BJ (cell line): ENCODE measurements at regions of chr1 and their contacts with region 1.

Region 1: DNA sequence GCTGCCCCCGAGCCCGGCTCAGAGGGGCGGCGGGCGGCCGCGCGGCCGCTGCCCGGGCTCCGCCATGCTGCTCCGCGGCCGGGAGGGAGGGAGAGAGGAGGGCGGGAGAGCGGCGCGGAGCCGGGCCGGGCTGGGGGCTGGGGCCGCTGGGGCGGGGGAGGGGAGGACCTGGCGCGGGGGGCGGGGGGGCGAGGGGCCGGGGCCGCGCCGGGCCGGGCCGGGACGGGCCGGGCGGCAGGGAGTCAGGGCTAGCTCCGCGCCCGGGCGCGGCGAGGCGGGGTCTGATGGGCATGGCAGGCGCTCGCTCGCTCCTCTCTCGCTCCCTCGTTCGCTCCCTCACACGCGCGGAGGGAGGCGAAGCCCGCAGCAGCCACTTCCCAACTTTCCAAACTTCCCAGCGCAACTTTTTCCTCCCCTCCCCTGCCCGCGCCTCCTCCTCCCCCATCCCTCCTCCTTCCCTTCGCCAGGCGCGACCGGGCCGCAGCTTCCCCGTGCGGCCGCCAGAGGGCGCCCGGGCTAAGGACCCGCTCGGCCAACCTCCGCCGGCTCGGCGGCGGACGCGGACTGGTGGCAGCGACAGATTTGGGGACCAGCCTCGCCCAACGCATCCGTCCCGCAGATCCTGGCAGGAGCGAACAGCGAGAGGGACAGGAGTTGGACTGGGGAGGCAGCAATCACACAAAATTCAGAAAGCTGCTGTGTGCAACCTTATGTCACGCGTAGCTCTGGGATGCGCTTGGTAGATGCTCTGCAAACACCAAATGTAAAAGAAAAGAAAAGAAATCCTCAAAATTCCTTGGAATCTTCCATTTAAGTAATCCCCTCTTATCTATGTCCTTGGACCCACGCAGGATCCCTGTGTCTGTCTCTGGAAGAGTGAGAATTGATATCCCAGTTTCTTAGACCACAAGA is at the start of gene TRABD2B:
- DNase-seq: no peak
- H3K4me3 ChIP-seq: peak within 1 kb of the TSS; percentile 52
- H3K27me3 ChIP-seq: peaks cover 14% of the 10 kb centered on the region
- CTCF ChIP-seq: peak; percentile 82
- polyA plus RNA-seq, gene TRABD2B: not detected in 2 replicates

Region 2: GRCh38 chr1:47986761-47987200 is 10.8 kb before region 1 on chr1:
- CTCF ChIA-PET with region 1: interaction called, 14 read pairs
- POLR2A ChIA-PET with region 1: no interaction called
- DNase-seq: no peak
- H3K4me3 ChIP-seq: no peak overlapping the region
- H3K27me3 ChIP-seq: peaks cover 8% of the 10 kb centered on the region
- CTCF ChIP-seq: no peak

Region 3: GRCh38 chr1:48019714-48020315 is 22.3 kb after region 1 on chr1:
- CTCF ChIA-PET with region 1: interaction called, 17 read pairs
- POLR2A ChIA-PET with region 1: interaction called, 9 read pairs
- DNase-seq: no peak
- H3K4me3 ChIP-seq: no peak overlapping the region
- H3K27me3 ChIP-seq: no peaks in the 10 kb centered on the region
- CTCF ChIP-seq: no peak

Region 4: DNA sequence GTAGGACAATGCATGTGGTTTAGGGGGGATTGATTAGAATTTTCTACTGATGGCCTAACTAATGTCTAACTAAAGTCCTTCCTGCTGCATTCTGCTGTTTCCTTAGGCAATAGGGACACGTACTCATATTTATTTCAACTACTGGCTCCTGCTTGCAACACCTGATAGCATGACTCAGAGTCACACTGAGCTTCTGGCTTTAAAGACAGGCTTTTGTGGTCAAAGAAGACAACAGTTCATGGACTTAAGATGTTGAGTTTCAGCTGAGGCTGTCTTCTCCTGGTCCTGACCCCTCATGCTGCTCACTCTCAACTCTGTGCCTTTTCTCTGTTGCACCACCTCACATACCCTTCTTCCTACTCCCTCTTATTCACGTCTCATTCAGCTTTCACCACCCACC is 28.7 kb after region 1 on chr1:
- CTCF ChIA-PET with region 1: interaction called, 10 read pairs
- POLR2A ChIA-PET with region 1: no interaction called
- DNase-seq: no peak
- H3K4me3 ChIP-seq: no peak overlapping the region
- H3K27me3 ChIP-seq: no peaks in the 10 kb centered on the region
- CTCF ChIP-seq: no peak

Region 5: GRCh38 chr1:48061162-48062136 is 63.9 kb after region 1 on chr1:
- CTCF ChIA-PET with region 1: interaction called, 36 read pairs
- POLR2A ChIA-PET with region 1: no interaction called
- DNase-seq: no peak
- H3K4me3 ChIP-seq: no peak overlapping the region
- H3K27me3 ChIP-seq: no peaks in the 10 kb centered on the region
- CTCF ChIP-seq: peak; percentile 65

Region 6: DNA sequence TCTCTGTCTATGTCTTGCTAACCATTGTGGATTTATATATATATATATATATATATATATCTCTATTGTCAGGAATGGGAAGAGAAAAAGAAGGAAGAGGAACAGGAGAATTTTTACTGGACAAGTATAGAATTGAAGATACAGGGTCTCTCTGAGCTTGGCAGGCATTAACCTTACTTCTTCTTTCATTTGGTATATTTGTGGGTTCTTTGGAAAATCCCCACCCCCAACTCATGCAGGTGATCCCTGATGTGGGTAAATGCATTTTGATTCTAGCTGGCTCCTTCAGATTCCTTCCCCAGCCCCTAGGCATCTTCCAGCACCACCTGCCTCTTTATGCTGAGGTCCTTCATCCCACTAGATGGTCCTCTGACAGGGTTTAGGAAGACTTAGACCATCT is 78.5 kb after region 1 on chr1:
- CTCF ChIA-PET with region 1: no interaction called
- POLR2A ChIA-PET with region 1: no interaction called
- DNase-seq: no peak
- H3K4me3 ChIP-seq: no peak overlapping the region
- H3K27me3 ChIP-seq: no peaks in the 10 kb centered on the region
- CTCF ChIP-seq: no peak